ENCODE measurements at regions of chr16 and their contacts with region 1.

Region 1: DNA sequence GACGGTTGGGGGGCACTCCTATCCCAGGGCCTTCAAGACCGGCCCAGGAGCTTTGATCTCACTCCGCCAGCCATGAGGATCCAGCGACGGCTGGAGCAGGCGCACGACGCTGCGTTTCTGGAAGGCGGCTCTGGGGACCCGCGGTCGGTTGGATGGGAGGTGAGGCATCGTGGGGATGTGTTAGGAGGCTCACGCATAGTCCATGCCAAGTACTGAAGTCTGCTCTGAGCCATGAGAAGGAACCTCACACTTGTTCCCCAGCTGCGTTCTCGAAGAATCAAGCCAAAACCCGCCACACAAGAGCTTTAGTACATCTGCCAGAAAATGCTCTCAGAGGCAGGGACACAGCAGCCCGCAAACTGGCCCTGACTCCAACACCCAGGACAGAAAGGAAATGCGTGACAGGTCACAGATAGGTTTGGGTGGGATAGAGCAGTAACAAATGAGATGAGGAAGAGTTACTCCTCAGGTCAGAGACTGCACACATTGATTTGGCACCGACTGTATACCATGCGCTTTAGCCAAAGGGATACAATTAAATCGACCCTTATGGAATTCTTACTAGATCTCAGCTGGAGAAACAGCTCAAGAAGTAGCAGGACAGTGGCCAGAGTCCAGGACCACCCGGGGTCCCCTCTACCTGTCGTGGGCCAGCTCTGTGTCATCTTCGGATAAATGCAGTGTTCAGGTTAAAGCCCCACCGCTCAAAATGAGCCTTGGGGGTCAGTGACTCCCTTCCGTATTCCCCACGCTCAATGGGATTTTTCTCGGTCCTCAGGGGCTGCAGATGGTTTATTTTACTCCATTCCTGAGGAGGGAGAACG is 6.7 kb upstream of the GSG1L start:
- DNase-seq: no peak
- H3K4me3 Mint-ChIP-seq: no peak overlapping the region
- H3K27ac Mint-ChIP-seq: no peak overlapping the region
- H3K4me1 Mint-ChIP-seq: no peaks in the 10 kb centered on the region
- H3K27me3 Mint-ChIP-seq: peaks cover 7% of the 10 kb centered on the region

Region 2: GRCh38 chr16:27639561-27640276 is 430.5 kb before region 1 on chr16:
- intact Hi-C with region 1: loop called (anchors 1 kb)
- DNase-seq: no peak
- H3K4me3 Mint-ChIP-seq: no peak overlapping the region
- H3K27ac Mint-ChIP-seq: no peak overlapping the region
- H3K4me1 Mint-ChIP-seq: no peaks in the 10 kb centered on the region
- H3K27me3 Mint-ChIP-seq: peaks cover 2% of the 10 kb centered on the region

Region 3: DNA sequence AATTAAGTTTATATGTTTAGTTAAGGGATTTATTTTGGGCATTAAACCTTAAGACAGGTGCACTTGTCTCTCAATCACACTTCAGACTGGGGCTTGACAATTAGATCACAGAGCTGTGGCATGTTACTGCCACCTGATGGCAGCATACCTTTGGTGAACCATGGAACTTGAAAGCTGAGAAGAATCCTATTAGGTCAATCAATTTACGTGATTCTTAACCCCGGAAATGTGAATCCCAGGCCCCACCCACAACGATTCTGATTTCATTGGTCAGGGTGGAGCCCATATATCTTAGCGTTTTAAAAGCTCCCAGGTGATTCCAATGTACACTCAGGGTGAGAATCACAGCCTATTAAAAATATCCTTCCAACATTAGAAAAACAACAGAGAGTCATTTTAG is 97.7 kb before region 1 on chr16:
- intact Hi-C with region 1: loop called (anchors 1 kb)
- DNase-seq: no peak
- H3K4me3 Mint-ChIP-seq: no peak overlapping the region
- H3K27ac Mint-ChIP-seq: no peak overlapping the region
- H3K4me1 Mint-ChIP-seq: no peaks in the 10 kb centered on the region
- H3K27me3 Mint-ChIP-seq: peaks cover 6% of the 10 kb centered on the region